Activated B cell treated with CpG ODN at 0.5 μM for 24 hours (primary cell): ENCODE measurements at regions of chr12 and their contacts with region 1.

Region 1: DNA sequence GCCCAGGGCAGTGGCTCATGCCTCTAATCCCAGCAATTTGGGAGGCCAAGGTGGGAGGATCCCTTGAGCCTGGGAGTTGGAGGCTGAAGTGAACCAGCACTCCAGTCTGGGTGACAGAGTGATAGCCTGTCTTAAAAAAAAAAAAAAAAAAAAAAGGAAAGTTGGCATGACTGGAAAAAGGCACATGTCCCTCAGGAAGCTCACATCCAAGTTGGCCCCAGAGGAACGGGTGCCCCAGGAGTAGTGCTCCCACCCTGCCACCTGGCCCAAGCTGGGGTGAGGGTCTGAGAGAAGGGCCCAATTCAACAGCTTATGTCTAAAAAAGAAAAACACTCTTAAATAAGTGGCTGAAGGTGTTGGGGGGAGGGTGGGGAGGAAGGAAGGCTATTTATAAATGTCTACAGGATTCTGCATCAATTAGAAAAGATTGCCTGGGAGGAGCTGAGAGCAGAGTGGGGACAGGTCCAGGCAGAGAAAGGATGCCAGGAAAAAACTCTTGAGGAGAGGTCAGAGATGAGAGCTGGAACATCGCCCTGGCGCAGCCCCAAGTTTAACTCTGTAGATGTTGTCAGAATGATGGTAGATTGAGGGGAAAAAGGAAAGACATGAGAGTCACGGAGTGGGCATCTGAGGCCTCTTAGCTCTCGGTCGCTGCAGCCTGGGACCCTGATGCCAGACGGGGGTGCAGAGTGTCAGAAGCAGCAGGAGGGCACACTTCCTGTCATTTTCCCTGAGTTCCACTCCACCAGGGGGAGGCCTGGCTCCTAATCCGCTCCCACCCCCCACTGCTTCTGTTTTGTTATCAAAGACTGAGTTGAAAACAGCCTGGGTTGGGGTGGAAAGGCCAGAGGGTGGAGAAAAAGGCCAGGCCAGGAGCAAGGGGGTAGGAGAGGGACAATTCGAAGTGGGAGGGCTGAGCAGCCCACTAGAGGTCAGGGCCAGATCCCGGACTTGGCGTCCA is 7.3 kb downstream of the SPRYD3 start:
- DNase-seq: no peak
- ATAC-seq: no peak
- H3K4me3 Mint-ChIP-seq: no peak overlapping the region
- H3K27ac Mint-ChIP-seq: no peak overlapping the region
- H3K4me1 Mint-ChIP-seq: peaks cover 32% of the 10 kb centered on the region
- H3K27me3 Mint-ChIP-seq: no peaks in the 10 kb centered on the region
- CTCF ChIP-seq: no peak

Region 2: DNA sequence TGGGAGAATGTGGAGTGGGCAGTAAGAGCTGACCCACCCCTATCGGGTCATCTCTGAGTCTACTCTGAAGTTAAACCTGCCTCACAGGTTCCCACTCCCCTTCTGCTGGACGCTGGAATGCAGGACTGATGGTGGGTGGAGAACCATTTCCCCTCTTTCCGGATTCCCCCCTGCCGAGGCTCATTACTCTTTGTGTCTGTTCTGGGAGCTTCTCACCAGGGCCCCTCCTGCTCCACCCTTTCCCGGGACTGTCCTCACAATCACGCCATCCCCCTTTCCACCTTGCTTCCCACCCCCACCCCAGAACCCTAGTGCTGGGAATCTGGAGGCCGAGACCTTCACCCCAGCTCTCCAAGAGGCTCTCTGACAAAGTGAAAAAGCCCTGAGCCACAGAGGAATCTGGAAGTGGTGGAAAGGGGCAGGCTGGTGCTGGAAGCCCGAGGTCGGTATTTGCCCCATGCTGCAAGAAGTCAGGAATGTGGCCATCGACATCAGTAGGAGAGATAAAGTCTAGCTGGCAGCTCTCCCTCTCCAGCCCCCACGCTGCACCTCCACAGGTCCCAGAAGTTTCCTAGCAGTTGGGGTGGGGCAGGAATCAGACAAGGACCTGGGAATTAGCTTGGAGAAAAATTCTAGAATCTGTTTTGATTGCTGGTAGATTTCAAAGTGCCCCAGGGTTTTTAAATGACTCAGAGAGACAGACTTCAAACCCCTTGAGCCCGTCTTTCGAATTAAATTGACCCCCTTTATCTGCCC is 126.1 kb before region 1 on chr12:
- CTCF ChIA-PET with region 1: no interaction called
- POLR2A ChIA-PET with region 1: no interaction called
- intact Hi-C with region 1: no loop called
- DNase-seq: no peak
- ATAC-seq: no peak
- H3K4me3 Mint-ChIP-seq: no peak overlapping the region
- H3K27ac Mint-ChIP-seq: no peak overlapping the region
- H3K4me1 Mint-ChIP-seq: peaks cover 7% of the 10 kb centered on the region
- H3K27me3 Mint-ChIP-seq: peaks cover 17% of the 10 kb centered on the region
- CTCF ChIP-seq: no peak

Region 3: GRCh38 chr12:53034459-53034858 is 37.4 kb before region 1 on chr12:
- CTCF ChIA-PET with region 1: no interaction called
- POLR2A ChIA-PET with region 1: no interaction called
- intact Hi-C with region 1: no loop called
- DNase-seq: no peak
- ATAC-seq: no peak
- H3K4me3 Mint-ChIP-seq: no peak overlapping the region
- H3K27ac Mint-ChIP-seq: no peak overlapping the region
- H3K4me1 Mint-ChIP-seq: peaks cover 3% of the 10 kb centered on the region
- H3K27me3 Mint-ChIP-seq: no peaks in the 10 kb centered on the region
- CTCF ChIP-seq: no peak

Region 4: GRCh38 chr12:53054112-53054833 is 17.6 kb before region 1 on chr12:
- CTCF ChIA-PET with region 1: interaction called, 11 read pairs
- POLR2A ChIA-PET with region 1: interaction called, 6 read pairs
- intact Hi-C with region 1: loop called (anchors 2 kb)
- DNase-seq: peak; percentile 86
- ATAC-seq: peak; percentile 97
- H3K4me3 Mint-ChIP-seq: peak overlapping the region; percentile 95
- H3K27ac Mint-ChIP-seq: peak overlapping the region; percentile 90
- H3K4me1 Mint-ChIP-seq: peaks cover 12% of the 10 kb centered on the region
- H3K27me3 Mint-ChIP-seq: peaks cover 6% of the 10 kb centered on the region
- CTCF ChIP-seq: no peak

Region 5: GRCh38 chr12:53086361-53086760 is 14.5 kb after region 1 on chr12:
- CTCF ChIA-PET with region 1: interaction called, 77 read pairs
- POLR2A ChIA-PET with region 1: no interaction called
- intact Hi-C with region 1: loop called (anchors 2 kb)
- DNase-seq: no peak
- ATAC-seq: no peak
- H3K4me3 Mint-ChIP-seq: no peak overlapping the region
- H3K27ac Mint-ChIP-seq: no peak overlapping the region
- H3K4me1 Mint-ChIP-seq: no peaks in the 10 kb centered on the region
- H3K27me3 Mint-ChIP-seq: peaks cover 22% of the 10 kb centered on the region
- CTCF ChIP-seq: no peak